HEK293 (cell line): ENCODE measurements at regions of chr15 and their contacts with region 1.

Region 1: GRCh38 chr15:72599855-72600464 is 54.5 kb upstream of the GOLGA6B start:
- H3K4me3 ChIP-seq: no peak overlapping the region
- H3K27ac ChIP-seq: no peak overlapping the region
- H3K4me1 ChIP-seq: no peaks in the 10 kb centered on the region; the same call in 1 of the 2 replicates
- CTCF ChIP-seq: peak; percentile 54

Region 2: GRCh38 chr15:72312605-72313447 is 287.1 kb before region 1 on chr15:
- CTCF ChIA-PET with region 1: interaction called, 15 read pairs
- POLR2A ChIA-PET with region 1: no interaction called
- H3K4me3 ChIP-seq: no peak overlapping the region
- H3K27ac ChIP-seq: no peak overlapping the region
- H3K4me1 ChIP-seq: no peaks in the 10 kb centered on the region
- CTCF ChIP-seq: peak; percentile 82

Region 3: GRCh38 chr15:72545156-72545555 is 54.8 kb before region 1 on chr15:
- CTCF ChIA-PET with region 1: interaction called, 11 read pairs
- POLR2A ChIA-PET with region 1: no interaction called
- H3K4me3 ChIP-seq: no peak overlapping the region
- H3K27ac ChIP-seq: no peak overlapping the region
- H3K4me1 ChIP-seq: peaks cover 5% of the 10 kb centered on the region; the same call in 1 of the 2 replicates
- CTCF ChIP-seq: no peak

Region 4: GRCh38 chr15:72671535-72671934 is 71.6 kb after region 1 on chr15:
- CTCF ChIA-PET with region 1: interaction called, 41 read pairs
- POLR2A ChIA-PET with region 1: no interaction called
- H3K4me3 ChIP-seq: no peak overlapping the region
- H3K27ac ChIP-seq: no peak overlapping the region
- H3K4me1 ChIP-seq: no peaks in the 10 kb centered on the region
- CTCF ChIP-seq: no peak

Region 5: GRCh38 chr15:72778796-72779195 is 178.8 kb after region 1 on chr15:
- CTCF ChIA-PET with region 1: no interaction called
- POLR2A ChIA-PET with region 1: no interaction called
- H3K4me3 ChIP-seq: no peak overlapping the region
- H3K27ac ChIP-seq: no peak overlapping the region
- H3K4me1 ChIP-seq: no peaks in the 10 kb centered on the region
- CTCF ChIP-seq: no peak